T-cell (primary cell): ENCODE measurements at regions of chr4 and their contacts with region 1.

Region 1: DNA sequence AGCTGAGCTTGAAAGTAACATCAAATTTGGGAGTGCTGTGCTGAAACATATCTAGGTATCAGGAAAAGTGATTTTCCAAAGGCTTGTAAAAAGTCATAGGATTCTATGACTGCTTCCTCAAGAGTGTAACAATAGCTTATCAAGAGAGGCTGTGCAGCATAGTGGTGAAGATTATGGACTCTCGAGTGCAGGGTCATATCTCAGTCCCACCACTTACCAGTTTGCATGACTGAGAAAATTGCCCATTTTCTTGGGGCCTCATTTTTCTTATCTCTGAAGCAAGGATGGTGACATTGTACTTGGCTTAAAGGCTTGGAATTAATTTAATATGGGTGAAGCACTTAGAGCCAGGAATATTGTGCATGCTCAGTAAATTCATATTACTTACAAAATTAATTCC is 57.2 kb downstream of the AFF1 start:
- DNase-seq: no peak
- ATAC-seq: no peak
- H3K4me3 ChIP-seq: no peak overlapping the region
- H3K4me3 Mint-ChIP-seq: no peak overlapping the region
- H3K27ac ChIP-seq: no peak overlapping the region
- H3K27ac Mint-ChIP-seq: no peak overlapping the region
- H3K4me1 ChIP-seq: no peaks in the 10 kb centered on the region
- H3K4me1 Mint-ChIP-seq: peaks cover 0 to 23% (median 16%) of the 10 kb centered on the region in 3 donors
- H3K27me3 ChIP-seq: no peaks in the 10 kb centered on the region
- H3K27me3 Mint-ChIP-seq: no peaks in the 10 kb centered on the region

Region 2: DNA sequence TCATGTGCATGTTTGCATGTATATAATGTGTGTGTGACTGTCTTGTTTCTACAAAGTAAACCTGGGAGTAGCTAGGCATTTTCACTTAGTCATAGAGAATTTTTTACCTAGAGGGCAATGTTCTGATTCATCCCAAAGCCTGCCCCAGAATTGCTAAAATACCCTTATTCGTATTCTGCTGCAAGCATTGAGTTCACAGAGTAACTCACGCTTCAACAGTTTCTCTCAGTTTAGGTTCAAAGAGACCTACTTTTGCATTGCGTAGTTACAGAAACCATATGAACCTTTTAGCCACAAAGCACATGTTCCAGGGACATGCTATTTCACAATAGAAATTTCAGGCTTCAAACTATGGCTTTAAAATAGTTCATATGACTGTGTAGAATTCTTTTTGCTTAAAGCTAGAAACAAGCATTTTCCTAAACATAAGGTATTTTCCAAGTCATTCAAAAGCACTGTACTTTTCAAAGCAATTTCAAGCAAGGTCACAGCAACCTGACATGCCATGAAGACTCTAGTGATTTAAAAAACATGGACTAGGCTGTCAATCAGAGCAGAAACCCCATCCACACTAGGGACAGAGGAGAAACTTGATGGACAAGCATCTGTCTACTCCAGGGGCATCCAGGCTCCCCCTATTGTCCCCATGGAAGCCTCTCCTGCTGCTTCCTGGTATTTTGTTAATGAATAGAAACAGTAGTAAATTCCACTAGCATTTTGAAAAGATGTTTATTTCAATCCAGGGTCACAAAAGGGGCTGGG is 550.6 kb before region 1 on chr4:
- CTCF ChIA-PET with region 1: no interaction called
- POLR2A ChIA-PET with region 1: no interaction called
- DNase-seq: no peak
- ATAC-seq: no peak
- H3K4me3 ChIP-seq: no peak overlapping the region
- H3K4me3 Mint-ChIP-seq: no peak overlapping the region
- H3K27ac ChIP-seq: no peak overlapping the region
- H3K27ac Mint-ChIP-seq: no peak overlapping the region
- H3K4me1 ChIP-seq: no peaks in the 10 kb centered on the region
- H3K4me1 Mint-ChIP-seq: no peaks in the 10 kb centered on the region
- H3K27me3 ChIP-seq: no peaks in the 10 kb centered on the region
- H3K27me3 Mint-ChIP-seq: peaks cover 3% of the 10 kb centered on the region in 2 donors

Region 3: GRCh38 chr4:86848732-86849619 is 143.0 kb before region 1 on chr4 and contains the start of gene SLC10A6:
- CTCF ChIA-PET with region 1: no interaction called
- POLR2A ChIA-PET with region 1: no interaction called
- DNase-seq: no peak
- ATAC-seq: no peak
- H3K4me3 ChIP-seq: no peak within 1 kb of the TSS
- H3K4me3 Mint-ChIP-seq: no peak within 1 kb of the TSS
- H3K27ac ChIP-seq: no peak within 1 kb of the TSS
- H3K27ac Mint-ChIP-seq: no peak within 1 kb of the TSS
- H3K4me1 ChIP-seq: no peaks in the 10 kb centered on the region
- H3K4me1 Mint-ChIP-seq: no peaks in the 10 kb centered on the region
- H3K27me3 ChIP-seq: peaks cover 0 to 10% of the 10 kb centered on the region in 2 experiments
- H3K27me3 Mint-ChIP-seq: peaks cover 1 to 9% of the 10 kb centered on the region in 2 donors
- total RNA-seq, gene SLC10A6: not detected

Region 4: DNA sequence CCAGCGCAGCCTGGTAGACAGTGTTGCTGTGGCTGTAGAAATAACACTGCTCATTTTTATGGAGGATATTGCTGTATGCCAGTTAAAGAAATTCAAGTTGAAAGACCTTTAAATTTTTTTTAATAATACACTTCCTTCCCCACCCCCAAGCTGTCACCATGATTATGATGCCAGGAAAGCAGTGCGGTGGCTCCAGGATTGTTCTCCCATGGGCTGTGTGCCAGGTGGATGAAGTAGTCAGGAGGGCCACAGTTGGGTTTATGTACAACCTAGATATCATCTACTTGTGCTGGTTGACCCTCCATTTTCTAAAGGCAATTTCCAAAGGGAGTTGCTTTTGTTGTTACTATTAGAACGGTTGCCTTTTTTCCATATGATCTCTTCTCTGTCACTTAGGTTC is 79.4 kb after region 1 on chr4:
- CTCF ChIA-PET with region 1: interaction called in 1 of 2 experiments, 3 read pairs
- POLR2A ChIA-PET with region 1: interaction called in 1 of 2 experiments, 10 read pairs
- DNase-seq: no peak
- ATAC-seq: no peak
- H3K4me3 ChIP-seq: no peak overlapping the region
- H3K4me3 Mint-ChIP-seq: no peak overlapping the region
- H3K27ac ChIP-seq: no peak overlapping the region
- H3K27ac Mint-ChIP-seq: peak overlapping the region; percentile 13 to 18
- H3K4me1 ChIP-seq: peaks cover 3 to 17% of the 10 kb centered on the region in 2 experiments
- H3K4me1 Mint-ChIP-seq: peaks cover 37 to 55% (median 51%) of the 10 kb centered on the region in 3 donors
- H3K27me3 ChIP-seq: no peaks in the 10 kb centered on the region
- H3K27me3 Mint-ChIP-seq: no peaks in the 10 kb centered on the region